Posterior cingulate gyrus (tissue), 11 donors: ENCODE measurements at regions of chr1 and their contacts with region 1.

Region 1: GRCh38 chr1:55021965-55022546 is 17.3 kb upstream of the PCSK9 start:
- DNase-seq: peak; percentile 30 to 96 (median 81)

Region 2: DNA sequence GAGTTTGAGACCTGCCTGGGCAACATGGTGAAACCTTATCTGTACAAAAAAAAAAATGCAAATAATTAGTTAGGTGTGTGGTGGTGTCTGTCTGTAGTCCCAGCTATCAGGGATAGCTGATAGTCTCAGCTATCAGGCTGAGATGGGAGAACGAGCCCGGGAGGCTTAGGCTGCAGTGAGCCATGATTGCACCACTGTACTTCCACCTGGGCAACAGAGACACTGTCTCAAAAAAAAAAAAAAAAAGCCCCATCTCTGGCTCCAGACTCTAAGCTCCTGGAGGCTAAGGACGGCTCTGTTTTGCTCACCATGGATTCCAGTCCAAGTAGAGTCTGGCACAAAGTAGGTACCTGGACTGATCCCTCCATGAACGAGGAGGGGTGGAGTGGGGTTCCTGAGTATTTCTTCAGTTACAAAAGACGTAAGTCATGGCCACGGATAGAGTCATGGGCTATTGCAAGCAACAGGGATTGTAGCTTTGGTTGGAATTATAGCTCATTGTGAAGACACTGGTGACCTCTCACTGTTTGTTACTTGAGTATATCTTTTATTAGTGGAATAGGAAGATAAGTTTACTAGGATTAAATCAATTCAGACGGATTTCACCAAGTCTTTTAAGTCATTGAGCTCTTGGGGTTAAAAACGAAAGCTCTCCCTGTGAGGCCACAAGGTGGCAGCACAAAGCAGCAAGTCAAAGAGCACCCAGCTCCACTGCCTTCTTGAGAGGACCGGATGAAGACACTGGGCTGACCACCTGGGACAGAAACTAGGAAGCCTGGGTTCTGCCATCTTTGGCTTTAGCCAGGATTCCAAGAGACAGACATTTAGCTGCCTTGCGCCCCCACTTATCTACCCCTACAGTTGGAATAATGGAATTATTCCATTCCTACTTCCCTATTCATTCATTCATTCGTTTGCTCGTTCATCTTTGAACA is 77.2 kb before region 1 on chr1:
- intact Hi-C with region 1: loop called (anchors 1 kb)
- DNase-seq: peak; percentile 31 to 95 (median 74)

Region 3: DNA sequence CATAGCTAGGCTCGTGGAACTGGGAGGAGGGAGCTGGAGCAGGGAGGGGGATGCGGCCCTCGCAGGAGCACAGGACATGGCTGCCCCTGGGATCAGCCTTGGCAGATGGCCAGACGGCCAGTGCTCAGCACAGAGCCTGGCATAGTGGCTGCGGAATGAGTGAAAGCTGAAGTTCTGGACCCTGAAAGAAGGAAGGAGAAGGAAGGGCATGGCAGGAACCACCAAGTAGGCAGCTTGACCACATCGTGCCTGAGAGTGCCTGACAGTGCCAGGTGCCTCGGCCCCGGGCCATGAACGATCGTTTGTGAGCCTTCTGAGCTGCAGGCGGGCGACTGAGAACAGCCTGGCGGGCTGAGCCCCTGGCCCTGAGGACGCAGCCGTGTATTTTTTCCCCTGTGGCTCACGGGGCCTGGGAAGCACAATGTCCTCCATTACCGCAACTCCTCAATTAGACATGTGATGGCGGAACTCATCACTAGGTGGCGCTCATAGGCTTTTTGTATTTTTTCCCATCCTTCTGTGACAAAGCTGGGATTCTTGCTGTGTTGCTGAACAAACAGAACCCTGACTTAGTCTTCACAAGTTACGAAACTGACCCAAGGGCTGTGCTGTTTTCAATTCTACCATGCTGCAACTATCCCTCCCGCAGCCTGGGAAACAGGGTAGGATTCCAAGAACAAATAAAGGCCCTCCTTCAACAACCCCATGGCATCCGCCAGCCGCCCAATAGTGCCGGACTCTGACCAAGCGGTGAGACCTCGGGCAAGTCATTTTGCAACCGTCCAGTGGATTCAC is 71.5 kb before region 1 on chr1:
- intact Hi-C with region 1: loop called (anchors 1 kb)
- DNase-seq: peak in 8 of 10 donors; percentile 45 to 92 (median 80)